CD8-positive, alpha-beta memory T cell (primary cell): ENCODE measurements at regions of chr7 and their contacts with region 1.

Region 1: GRCh38 chr7:151008511-151009323 is 15.6 kb downstream of the ATG9B start:
- DNase-seq: peak; percentile 70 to 85 (median 79)
- H3K4me3 ChIP-seq: peak overlapping the region; percentile 44
- H3K4me3 Mint-ChIP-seq: peak overlapping the region; percentile 75 to 93 (median 83)
- H3K27ac ChIP-seq: peak overlapping the region; percentile 66
- H3K27ac Mint-ChIP-seq: peak overlapping the region; percentile 70 to 97 (median 93)
- H3K4me1 ChIP-seq: peaks cover 65% of the 10 kb centered on the region
- H3K4me1 Mint-ChIP-seq: peaks cover 48 to 65% (median 55%) of the 10 kb centered on the region in 3 donors
- H3K27me3 ChIP-seq: no peaks in the 10 kb centered on the region
- H3K27me3 Mint-ChIP-seq: peaks cover 0 to 6% of the 10 kb centered on the region in 2 donors

Region 2: GRCh38 chr7:150860291-150860977 is 148.3 kb before region 1 on chr7:
- CTCF ChIA-PET with region 1: no interaction called
- POLR2A ChIA-PET with region 1: no interaction called
- DNase-seq: no peak
- H3K4me3 ChIP-seq: no peak overlapping the region
- H3K4me3 Mint-ChIP-seq: no peak overlapping the region
- H3K27ac ChIP-seq: no peak overlapping the region
- H3K27ac Mint-ChIP-seq: no peak overlapping the region
- H3K4me1 ChIP-seq: no peaks in the 10 kb centered on the region
- H3K4me1 Mint-ChIP-seq: no peaks in the 10 kb centered on the region
- H3K27me3 ChIP-seq: no peaks in the 10 kb centered on the region
- H3K27me3 Mint-ChIP-seq: peaks cover 12 to 43% of the 10 kb centered on the region in 2 donors

Region 3: DNA sequence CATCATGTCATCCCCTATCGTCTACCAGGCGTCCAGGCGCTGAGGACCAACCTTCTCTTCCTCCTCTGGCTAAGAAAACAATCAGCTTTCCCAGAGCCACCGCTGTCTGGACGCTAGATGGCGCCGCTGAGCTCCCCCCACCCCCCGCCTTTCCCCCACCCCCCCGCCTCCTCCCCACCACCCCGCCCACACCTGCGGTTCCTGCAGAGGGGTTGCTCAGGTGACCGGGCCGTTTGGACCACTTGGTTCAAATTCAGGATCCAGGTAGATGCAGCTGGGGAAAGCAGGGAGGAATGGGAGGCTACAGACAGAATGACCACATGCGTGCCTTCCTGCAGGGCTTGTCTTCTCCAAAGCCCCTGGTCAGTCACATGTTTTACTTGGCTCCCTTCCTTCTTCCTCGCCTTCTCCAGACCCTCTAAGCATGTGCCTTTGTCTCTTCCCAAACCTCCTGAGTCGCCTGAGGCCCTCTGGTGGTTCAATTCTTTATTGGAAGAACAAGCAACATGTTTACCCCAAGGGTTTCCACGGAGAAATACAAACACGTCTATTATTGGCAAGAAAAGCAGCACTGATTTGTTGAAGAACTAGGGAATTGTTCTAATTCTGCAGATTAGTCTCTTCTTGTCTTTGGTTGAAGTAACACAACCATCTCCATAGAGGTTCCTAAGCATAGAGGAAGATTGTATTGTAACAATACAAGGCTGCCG is 131.7 kb before region 1 on chr7:
- CTCF ChIA-PET with region 1: no interaction called
- POLR2A ChIA-PET with region 1: no interaction called
- DNase-seq: peak; percentile 17 to 58 (median 31)
- H3K4me3 ChIP-seq: no peak overlapping the region
- H3K4me3 Mint-ChIP-seq: peak overlapping the region in 5 of 7 donors; percentile 27 to 54 (median 42)
- H3K27ac ChIP-seq: no peak overlapping the region
- H3K27ac Mint-ChIP-seq: peak overlapping the region in 6 of 8 donors; percentile 14 to 93 (median 77)
- H3K4me1 ChIP-seq: peaks cover 12% of the 10 kb centered on the region
- H3K4me1 Mint-ChIP-seq: peaks cover 22 to 35% (median 22%) of the 10 kb centered on the region in 3 donors
- H3K27me3 ChIP-seq: no peaks in the 10 kb centered on the region
- H3K27me3 Mint-ChIP-seq: peaks cover 0 to 5% of the 10 kb centered on the region in 2 donors

Region 4: DNA sequence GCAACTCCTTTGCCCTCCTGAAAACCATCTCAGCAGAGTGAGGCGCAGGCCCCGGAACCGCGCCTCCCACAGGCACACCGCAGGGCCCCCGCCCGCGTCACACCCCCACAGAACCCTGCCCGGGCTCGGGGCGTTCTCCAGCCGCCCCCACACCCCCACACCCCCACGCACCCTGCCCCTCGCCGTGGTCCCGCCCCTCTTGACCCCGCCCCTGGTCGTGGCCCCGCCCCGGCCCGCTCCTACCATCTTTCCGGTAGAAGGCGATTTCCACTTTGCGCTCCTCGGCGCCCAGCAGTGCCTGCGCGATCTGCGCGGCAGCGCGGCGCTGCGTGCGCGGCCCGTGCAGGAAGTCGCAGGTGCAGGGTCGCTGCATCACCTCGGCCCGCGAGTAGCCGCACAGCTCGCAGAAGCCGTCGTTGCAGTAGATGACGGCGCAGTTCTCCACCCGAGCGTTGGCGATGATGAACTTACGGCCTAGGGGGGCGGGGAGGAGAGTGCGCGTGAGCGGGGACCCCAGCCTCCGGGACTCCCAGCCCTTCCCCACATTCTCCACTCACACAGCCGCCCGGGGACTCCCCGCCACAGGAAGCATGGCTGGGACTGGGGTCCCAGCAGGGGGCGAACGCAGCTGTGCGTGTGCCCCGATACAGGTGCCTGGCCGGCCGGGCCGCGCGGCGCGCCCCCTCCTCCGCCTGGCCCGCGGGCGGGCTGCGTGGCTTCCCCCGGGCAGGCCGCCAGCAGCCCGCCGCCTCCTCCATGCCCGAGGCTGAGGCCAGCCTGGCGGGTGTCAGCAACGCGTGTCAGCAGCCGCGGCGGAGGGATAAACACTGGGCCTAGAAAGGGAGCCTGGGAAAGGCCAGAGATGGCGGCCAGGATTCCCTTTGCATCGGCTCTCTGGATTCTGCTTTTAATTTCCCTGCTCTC is 34.0 kb before region 1 on chr7:
- CTCF ChIA-PET with region 1: interaction called, 13 read pairs
- POLR2A ChIA-PET with region 1: no interaction called
- DNase-seq: peak; percentile 69 to 86 (median 78)
- H3K4me3 ChIP-seq: peak overlapping the region; percentile 78
- H3K4me3 Mint-ChIP-seq: peak overlapping the region; percentile 86 to 90 (median 88)
- H3K27ac ChIP-seq: peak overlapping the region; percentile 64
- H3K27ac Mint-ChIP-seq: peak overlapping the region; percentile 58 to 96 (median 87)
- H3K4me1 ChIP-seq: peaks cover 45% of the 10 kb centered on the region
- H3K4me1 Mint-ChIP-seq: peaks cover 32 to 46% (median 35%) of the 10 kb centered on the region in 3 donors
- H3K27me3 ChIP-seq: peaks cover 21% of the 10 kb centered on the region
- H3K27me3 Mint-ChIP-seq: peaks cover 24 to 25% of the 10 kb centered on the region in 2 donors

Region 5: DNA sequence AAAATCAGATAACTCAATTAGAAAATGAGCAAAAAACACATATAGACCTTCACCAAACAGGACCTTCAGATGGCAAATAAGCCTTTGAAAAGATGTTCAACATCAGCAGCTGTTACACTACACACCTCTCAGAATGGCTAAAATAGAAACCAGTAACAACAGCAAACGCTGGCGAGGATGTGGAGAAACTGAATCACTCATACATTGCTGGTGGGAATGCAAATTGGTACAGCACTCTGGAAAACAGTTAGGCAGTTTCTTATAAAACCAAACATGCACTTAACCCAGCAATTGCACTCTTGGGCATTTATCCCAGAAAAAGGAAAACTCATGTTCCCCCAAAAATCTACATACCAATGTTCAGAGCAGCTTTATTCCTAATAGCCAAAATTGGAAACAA is 277.4 kb after region 1 on chr7:
- CTCF ChIA-PET with region 1: no interaction called
- POLR2A ChIA-PET with region 1: no interaction called
- DNase-seq: no peak
- H3K4me3 ChIP-seq: no peak overlapping the region
- H3K4me3 Mint-ChIP-seq: no peak overlapping the region
- H3K27ac ChIP-seq: no peak overlapping the region
- H3K27ac Mint-ChIP-seq: no peak overlapping the region
- H3K4me1 ChIP-seq: no peaks in the 10 kb centered on the region
- H3K4me1 Mint-ChIP-seq: no peaks in the 10 kb centered on the region
- H3K27me3 ChIP-seq: no peaks in the 10 kb centered on the region
- H3K27me3 Mint-ChIP-seq: peaks cover 11 to 23% of the 10 kb centered on the region in 2 donors